ENCODE measurements at regions of chr17 and their contacts with region 1.

Region 1: GRCh38 chr17:4948931-4949320 is 596 bp upstream of the PFN1 start:
- DNase-seq: peak; percentile 85
- ATAC-seq: peak; percentile 35
- H3K4me3 Mint-ChIP-seq: peak overlapping the region; percentile 97
- H3K27ac Mint-ChIP-seq: peak overlapping the region; percentile 99
- H3K4me1 Mint-ChIP-seq: peaks cover 32% of the 10 kb centered on the region
- H3K27me3 Mint-ChIP-seq: no peaks in the 10 kb centered on the region
- CTCF ChIP-seq: no peak

Region 2: DNA sequence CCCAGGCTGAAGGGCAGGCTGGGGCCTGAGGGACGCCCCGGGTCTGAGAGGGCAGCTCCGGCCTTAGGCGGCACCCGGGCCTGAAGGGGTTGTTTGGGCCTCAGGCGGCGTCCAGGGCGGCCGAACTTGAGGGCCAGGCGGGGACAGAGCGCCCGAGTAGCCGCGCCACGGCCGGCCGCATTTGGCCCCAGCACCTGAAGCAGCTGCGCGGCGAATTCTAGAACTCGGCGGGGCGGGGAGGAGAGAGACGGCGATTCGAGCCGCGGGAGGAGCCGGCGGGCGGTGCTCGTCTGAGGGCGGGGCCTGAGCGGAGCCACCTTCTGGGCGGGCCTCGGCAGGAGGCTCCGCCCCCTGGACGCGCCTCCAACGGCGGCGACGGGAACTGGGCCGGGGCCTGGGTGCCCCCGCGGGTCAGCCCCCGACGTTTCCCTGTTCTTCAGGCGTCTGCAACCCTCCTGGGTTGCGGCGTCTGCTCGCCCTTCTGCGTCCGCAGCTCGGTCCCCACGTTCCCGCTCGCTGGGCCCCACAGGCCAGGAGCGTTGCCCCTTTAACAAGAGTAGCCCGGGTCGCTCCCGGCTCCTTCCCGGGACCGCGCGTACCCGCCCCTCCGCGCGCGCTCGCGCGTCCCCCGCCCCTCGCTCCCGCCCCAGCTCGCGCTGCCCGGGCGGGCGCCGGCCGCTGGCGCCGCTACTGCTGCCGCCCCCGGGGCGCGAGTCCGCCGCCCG is 48.5 kb after region 1 on chr17 and contains the starts of genes INCA1 and KIF1C:
- CTCF ChIA-PET with region 1: no interaction called
- POLR2A ChIA-PET with region 1: interaction called, 11 read pairs
- intact Hi-C with region 1: no loop called
- DNase-seq: peak; percentile 93
- ATAC-seq: peak; percentile 98
- H3K4me3 Mint-ChIP-seq: peak within 1 kb of the TSS; percentile 79
- H3K27ac Mint-ChIP-seq: peak within 1 kb of the TSS; percentile 71
- H3K4me1 Mint-ChIP-seq: peaks cover 17% of the 10 kb centered on the region
- H3K27me3 Mint-ChIP-seq: peaks cover 1% of the 10 kb centered on the region
- CTCF ChIP-seq: no peak
- total RNA-seq, gene INCA1: 0.63 TPM in 1 of 2 experiments, not detected in the other
- total RNA-seq, gene KIF1C: 35.7 to 37.4 TPM

Measured in activated CD8-positive, alpha-beta T cell treated with anti-CD3 and anti-CD28 coated beads for 36 hours (primary cell).